ENCODE measurements at regions of chr10 and their contacts with region 1.

Region 1: GRCh38 chr10:68560186-68560942 is at the start of gene TET1:
- DNase-seq: peak in 1 of 2 experiments; percentile 41
- H3K4me3 ChIP-seq: peak within 1 kb of the TSS; percentile 68
- H3K27ac ChIP-seq: no peak within 1 kb of the TSS
- H3K4me1 ChIP-seq: no peaks in the 10 kb centered on the region
- H3K27me3 ChIP-seq: peaks cover 15% of the 10 kb centered on the region; the same call in 1 of the 2 replicates
- CTCF ChIP-seq: no peak
- total RNA-seq, gene TET1: 1.9 and 2.4 TPM in 2 replicates

Region 2: DNA sequence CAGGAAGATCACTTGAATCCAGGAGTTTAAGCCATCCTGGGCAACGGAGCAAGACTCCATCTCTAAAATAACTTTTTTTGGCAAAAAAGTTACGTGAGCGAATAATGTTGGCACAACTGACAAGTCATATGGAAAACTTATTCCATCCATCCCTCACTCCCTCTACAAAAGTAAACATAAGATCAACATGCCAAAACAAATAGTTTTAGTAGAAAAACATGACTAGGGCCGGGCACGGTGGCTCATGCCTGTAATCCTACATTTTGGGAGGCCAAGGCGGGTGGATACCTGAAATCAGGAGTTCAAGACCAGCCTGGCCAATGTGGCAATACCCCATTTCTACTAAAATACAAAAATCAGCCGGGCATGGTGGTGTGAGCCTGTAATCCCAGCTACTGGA is 58.7 kb before region 1 on chr10:
- CTCF ChIA-PET with region 1: no interaction called
- POLR2A ChIA-PET with region 1: no interaction called
- intact Hi-C with region 1: no loop called
- DNase-seq: no peak
- H3K4me3 ChIP-seq: no peak overlapping the region
- H3K27ac ChIP-seq: no peak overlapping the region
- H3K4me1 ChIP-seq: no peaks in the 10 kb centered on the region
- H3K27me3 ChIP-seq: no peaks in the 10 kb centered on the region
- CTCF ChIP-seq: no peak

Region 3: GRCh38 chr10:68600041-68600778 is 39.8 kb after region 1 on chr10:
- CTCF ChIA-PET with region 1: no interaction called
- POLR2A ChIA-PET with region 1: interaction called, 8 read pairs
- intact Hi-C with region 1: loop called (anchors 1 kb)
- DNase-seq: peak; percentile 57 to 67
- H3K4me3 ChIP-seq: peak overlapping the region; percentile 53
- H3K27ac ChIP-seq: no peak overlapping the region
- H3K4me1 ChIP-seq: peaks cover 11% of the 10 kb centered on the region
- H3K27me3 ChIP-seq: no peaks in the 10 kb centered on the region
- CTCF ChIP-seq: no peak

Region 4: GRCh38 chr10:68647672-68648341 is 87.4 kb after region 1 on chr10:
- CTCF ChIA-PET with region 1: no interaction called
- POLR2A ChIA-PET with region 1: interaction called, 20 read pairs
- intact Hi-C with region 1: no loop called
- DNase-seq: peak in 1 of 2 experiments; percentile 80
- H3K4me3 ChIP-seq: no peak overlapping the region
- H3K27ac ChIP-seq: peak overlapping the region; percentile 52
- H3K4me1 ChIP-seq: peaks cover 9% of the 10 kb centered on the region
- H3K27me3 ChIP-seq: no peaks in the 10 kb centered on the region
- CTCF ChIP-seq: no peak

Region 5: GRCh38 chr10:69179743-69180524 is 619.6 kb after region 1 on chr10 and contains the start of gene SUPV3L1:
- CTCF ChIA-PET with region 1: no interaction called
- POLR2A ChIA-PET with region 1: no interaction called
- intact Hi-C with region 1: no loop called
- DNase-seq: peak; percentile 90 to 97
- H3K4me3 ChIP-seq: peak within 1 kb of the TSS; percentile 89
- H3K27ac ChIP-seq: peak within 1 kb of the TSS; percentile 81
- H3K4me1 ChIP-seq: peaks cover 19% of the 10 kb centered on the region
- H3K27me3 ChIP-seq: no peaks in the 10 kb centered on the region
- CTCF ChIP-seq: no peak
- total RNA-seq, gene SUPV3L1: 49.9 and 55.7 TPM in 2 replicates